ENCODE measurements at regions of chr18 and their contacts with region 1.

Region 1: DNA sequence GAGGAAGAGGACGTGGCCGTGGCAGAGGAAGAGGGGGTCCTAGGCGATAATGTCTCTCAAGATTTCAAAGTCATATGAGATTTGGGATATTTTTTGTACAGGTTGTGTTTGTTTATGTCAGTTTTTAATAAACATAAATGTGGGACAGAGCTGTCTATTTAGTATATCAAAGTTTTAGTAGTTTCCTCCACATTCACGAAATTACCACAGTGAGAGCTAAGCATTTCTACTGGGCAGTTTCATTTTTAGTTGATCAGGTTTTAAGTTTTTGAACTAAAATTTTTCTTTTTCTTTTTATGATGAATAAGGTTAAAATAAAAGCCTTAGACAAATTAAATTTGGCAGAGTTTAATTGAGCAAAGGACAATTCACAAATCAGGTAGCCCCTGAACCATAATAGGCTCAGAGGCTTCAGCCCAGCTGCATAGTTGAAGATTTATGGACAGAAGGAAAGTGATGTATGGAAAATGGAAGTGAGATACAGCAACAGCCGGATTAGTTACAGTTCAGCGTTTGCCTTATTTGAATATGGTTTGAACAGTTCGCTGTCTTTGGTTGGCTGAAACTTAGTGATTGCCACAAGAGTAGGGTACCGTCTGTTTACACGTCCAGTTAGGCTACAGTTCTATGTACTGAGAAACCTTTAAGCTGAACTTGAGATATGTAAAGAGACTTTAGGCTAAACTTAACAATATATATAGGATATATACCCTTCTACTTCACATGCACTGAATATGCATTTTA is 17.1 kb downstream of the SNRPD1 start:
- DNase-seq: no peak
- ATAC-seq: no peak
- H3K4me3 Mint-ChIP-seq: no peak overlapping the region
- H3K27ac Mint-ChIP-seq: peak overlapping the region; percentile 84
- H3K4me1 Mint-ChIP-seq: peaks cover 11% of the 10 kb centered on the region
- H3K27me3 Mint-ChIP-seq: no peaks in the 10 kb centered on the region

Region 2: GRCh38 chr18:21704603-21705364 is 75.5 kb after region 1 on chr18 and contains the start of gene ABHD3:
- CTCF ChIA-PET with region 1: no interaction called
- POLR2A ChIA-PET with region 1: no interaction called
- intact Hi-C with region 1: loop called in 1 of 2 experiments (anchors 5 kb)
- DNase-seq: peak; percentile 93
- ATAC-seq: peak; percentile 95
- H3K4me3 Mint-ChIP-seq: peak within 1 kb of the TSS; percentile 87
- H3K27ac Mint-ChIP-seq: peak within 1 kb of the TSS; percentile 93
- H3K4me1 Mint-ChIP-seq: peaks cover 24% of the 10 kb centered on the region
- H3K27me3 Mint-ChIP-seq: no peaks in the 10 kb centered on the region
- total RNA-seq, gene ABHD3: 13.7 to 14.3 TPM

Region 3: DNA sequence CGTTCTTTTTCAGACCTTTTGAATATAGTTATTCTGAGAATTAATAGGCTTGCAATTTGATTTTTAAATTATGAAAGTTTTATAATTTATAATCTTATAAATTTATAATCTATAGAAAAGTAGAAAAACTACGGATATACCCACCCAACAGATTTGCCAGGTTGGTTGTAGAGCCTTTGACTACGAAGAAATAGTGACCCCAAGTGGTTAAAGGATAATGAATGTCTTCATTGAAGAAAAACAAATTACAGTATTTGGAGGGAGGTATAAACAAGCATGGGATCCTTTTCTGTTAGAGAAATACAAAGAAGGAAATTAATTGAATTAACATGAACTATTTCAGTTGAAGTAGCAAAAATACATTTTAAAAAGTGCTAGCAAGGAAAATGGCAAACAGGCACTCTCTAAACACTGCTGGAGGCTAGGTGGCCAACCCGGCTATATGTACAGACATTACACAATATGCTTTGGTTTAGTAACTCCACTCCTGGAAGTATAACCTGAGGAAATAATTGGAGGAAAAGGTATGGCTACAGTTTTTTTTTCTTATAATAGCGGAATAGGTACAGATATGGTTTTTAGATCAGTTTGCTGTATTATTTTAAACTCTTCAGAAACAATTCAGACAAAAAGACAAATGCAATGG is 222.2 kb after region 1 on chr18:
- CTCF ChIA-PET with region 1: no interaction called
- POLR2A ChIA-PET with region 1: no interaction called
- intact Hi-C with region 1: loop called in 1 of 2 experiments (anchors 10 kb)
- DNase-seq: no peak
- ATAC-seq: no peak
- H3K4me3 Mint-ChIP-seq: no peak overlapping the region
- H3K27ac Mint-ChIP-seq: no peak overlapping the region
- H3K4me1 Mint-ChIP-seq: peaks cover 7% of the 10 kb centered on the region
- H3K27me3 Mint-ChIP-seq: no peaks in the 10 kb centered on the region

Measured in activated CD4-positive, alpha-beta T cell treated with anti-CD3 and anti-CD28 coated beads for 36 hours (primary cell).